H1 (cell line): ENCODE measurements at regions of chr1 and their contacts with region 1.

Region 1: GRCh38 chr1:31663622-31664452 is 19.2 kb upstream of the PEF1 start:
- DNase-seq: peak; percentile 25 to 98
- H3K4me3 ChIP-seq: no peak overlapping the region
- H3K27ac ChIP-seq: no peak overlapping the region
- H3K4me1 ChIP-seq: peaks cover 0 to 3% (median 0%) of the 10 kb centered on the region in 4 experiments; a peak in 3 of 7 replicates
- H3K27me3 ChIP-seq: no peaks in the 10 kb centered on the region
- CTCF ChIP-seq: peak in 2 of 3 experiments; percentile 93 to 96; a peak in 3 of 4 replicates
- EP300 ChIP-seq: no peak
- POLR2A ChIP-seq: no peak
- RAD21 ChIP-seq: peak; percentile 96 to 98

Region 2: GRCh38 chr1:31368611-31369107 is 295.2 kb before region 1 on chr1:
- CTCF ChIA-PET with region 1: no interaction called
- POLR2A ChIA-PET with region 1: no interaction called
- DNase-seq: no peak
- H3K4me3 ChIP-seq: no peak overlapping the region
- H3K27ac ChIP-seq: no peak overlapping the region
- H3K4me1 ChIP-seq: peaks cover 5 to 27% (median 17%) of the 10 kb centered on the region in 4 experiments
- H3K27me3 ChIP-seq: 0 out of 7 replicates have a peak, but pooled peaks cover 0 to 2% (median 0%) of the 10 kb centered on the region in 4 experiments
- CTCF ChIP-seq: no peak
- EP300 ChIP-seq: no peak
- POLR2A ChIP-seq: peak in 1 of 2 experiments; percentile 13; a peak in 1 of 3 replicates
- RAD21 ChIP-seq: no peak

Region 3: DNA sequence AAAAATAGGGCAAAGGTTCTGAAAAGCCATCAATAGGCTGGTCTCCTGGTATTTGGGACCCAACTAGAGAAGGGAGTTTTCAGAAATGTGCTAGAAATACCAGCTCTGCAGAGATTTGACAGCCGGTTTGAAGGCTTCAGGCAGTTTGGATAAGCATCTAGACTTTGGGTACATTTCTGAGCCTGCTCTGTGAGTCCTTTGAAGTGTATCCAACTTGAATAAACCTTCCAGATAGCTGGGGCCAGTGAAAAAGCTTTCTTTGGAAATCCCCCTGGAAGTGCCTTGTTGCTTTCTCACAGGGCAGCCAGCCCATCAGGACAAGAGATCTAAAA is 12.8 kb before region 1 on chr1:
- CTCF ChIA-PET with region 1: interaction called, 52 read pairs
- POLR2A ChIA-PET with region 1: interaction called, 4 read pairs
- DNase-seq: no peak
- H3K4me3 ChIP-seq: no peak overlapping the region
- H3K27ac ChIP-seq: no peak overlapping the region
- H3K4me1 ChIP-seq: no peaks in the 10 kb centered on the region
- H3K27me3 ChIP-seq: no peaks in the 10 kb centered on the region
- CTCF ChIP-seq: no peak
- EP300 ChIP-seq: no peak
- POLR2A ChIP-seq: no peak
- RAD21 ChIP-seq: no peak

Region 4: DNA sequence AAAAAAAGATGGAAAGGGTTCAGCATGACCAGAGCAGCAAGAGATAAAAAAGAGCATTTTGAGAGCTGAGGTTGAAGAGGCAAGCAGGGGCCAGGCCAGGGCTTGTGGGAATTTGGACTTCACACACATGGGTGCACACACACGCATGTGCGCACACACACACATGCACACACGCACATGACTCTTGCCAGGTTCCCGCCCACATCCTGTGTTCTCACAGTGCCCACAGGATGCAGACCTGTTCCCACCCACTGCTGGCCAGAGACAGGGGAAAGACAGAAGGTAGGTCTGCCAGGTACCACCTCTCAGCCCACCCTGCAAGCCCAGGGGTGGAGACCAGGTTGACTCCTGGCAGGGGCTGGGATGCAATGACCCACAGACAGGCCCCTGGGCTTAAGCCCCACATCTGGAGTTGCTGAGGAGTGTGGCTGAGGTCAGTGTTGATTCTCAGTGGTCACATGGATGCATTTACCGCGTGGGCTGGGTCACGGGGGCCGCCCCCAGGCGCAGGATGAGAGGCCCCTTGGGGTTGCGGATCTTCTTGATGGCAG is 35.6 kb after region 1 on chr1:
- CTCF ChIA-PET with region 1: interaction called, 100 read pairs
- POLR2A ChIA-PET with region 1: interaction called, 8 read pairs
- DNase-seq: no peak
- H3K4me3 ChIP-seq: no peak overlapping the region
- H3K27ac ChIP-seq: no peak overlapping the region
- H3K4me1 ChIP-seq: peaks cover 4 to 13% (median 5%) of the 10 kb centered on the region in 4 experiments
- H3K27me3 ChIP-seq: no peaks in the 10 kb centered on the region
- CTCF ChIP-seq: no peak
- EP300 ChIP-seq: no peak
- POLR2A ChIP-seq: no peak
- RAD21 ChIP-seq: no peak

Region 5: DNA sequence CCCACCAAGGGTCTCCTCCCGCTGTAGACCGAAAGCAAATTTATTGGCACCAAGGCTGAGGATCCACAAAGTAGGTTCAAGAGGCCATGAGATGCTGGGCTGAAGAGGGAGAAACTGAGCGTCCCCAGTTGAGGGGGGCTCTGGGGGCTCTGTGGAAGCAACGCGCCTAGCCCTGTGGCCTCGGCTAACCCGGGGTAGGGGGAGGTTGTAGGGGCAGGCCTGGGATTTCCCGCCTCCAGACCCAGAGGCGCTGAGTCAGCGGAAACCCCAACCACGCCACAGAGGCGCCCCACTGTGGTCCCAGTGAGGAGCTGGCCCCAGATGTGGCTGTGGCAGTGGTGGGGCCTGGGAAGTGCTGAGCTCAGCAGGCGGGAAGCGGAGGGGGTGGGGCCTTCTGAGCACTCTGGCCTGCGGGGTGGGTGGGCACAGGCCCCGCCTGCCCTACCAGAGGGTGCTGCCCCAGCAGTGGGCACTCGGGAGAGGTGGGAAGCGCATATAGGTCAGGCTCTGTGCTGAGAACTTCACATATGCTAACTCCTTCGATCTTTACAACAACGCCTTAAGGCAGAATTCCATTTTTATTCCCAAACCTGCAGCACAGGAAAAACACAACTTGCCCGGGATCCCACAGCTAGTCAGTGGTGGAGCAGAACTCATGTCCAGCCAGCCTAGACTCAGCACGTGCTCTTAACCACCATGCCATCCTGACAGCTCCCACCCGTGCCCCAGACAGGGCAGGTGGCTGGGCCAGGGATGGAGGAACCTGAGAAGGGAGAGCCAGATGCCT is 41.4 kb after region 1 on chr1:
- CTCF ChIA-PET with region 1: interaction called, 181 read pairs
- POLR2A ChIA-PET with region 1: interaction called, 8 read pairs
- DNase-seq: peak in 1 of 2 experiments; percentile 80
- H3K4me3 ChIP-seq: peak overlapping the region in 3 of 4 experiments; percentile 15 to 69 (median 17); a peak in 5 of 8 replicates
- H3K27ac ChIP-seq: no peak overlapping the region; the same call in 1 of the 2 replicates
- H3K4me1 ChIP-seq: peaks cover 15 to 35% (median 16%) of the 10 kb centered on the region in 4 experiments
- H3K27me3 ChIP-seq: no peaks in the 10 kb centered on the region; a peak in 1 of 7 replicates
- CTCF ChIP-seq: peak in 2 of 3 experiments; percentile 6 to 24; a peak in 2 of 4 replicates
- EP300 ChIP-seq: no peak
- POLR2A ChIP-seq: no peak
- RAD21 ChIP-seq: peak; percentile 32 to 47; a peak in 3 of 4 replicates

Region 6: DNA sequence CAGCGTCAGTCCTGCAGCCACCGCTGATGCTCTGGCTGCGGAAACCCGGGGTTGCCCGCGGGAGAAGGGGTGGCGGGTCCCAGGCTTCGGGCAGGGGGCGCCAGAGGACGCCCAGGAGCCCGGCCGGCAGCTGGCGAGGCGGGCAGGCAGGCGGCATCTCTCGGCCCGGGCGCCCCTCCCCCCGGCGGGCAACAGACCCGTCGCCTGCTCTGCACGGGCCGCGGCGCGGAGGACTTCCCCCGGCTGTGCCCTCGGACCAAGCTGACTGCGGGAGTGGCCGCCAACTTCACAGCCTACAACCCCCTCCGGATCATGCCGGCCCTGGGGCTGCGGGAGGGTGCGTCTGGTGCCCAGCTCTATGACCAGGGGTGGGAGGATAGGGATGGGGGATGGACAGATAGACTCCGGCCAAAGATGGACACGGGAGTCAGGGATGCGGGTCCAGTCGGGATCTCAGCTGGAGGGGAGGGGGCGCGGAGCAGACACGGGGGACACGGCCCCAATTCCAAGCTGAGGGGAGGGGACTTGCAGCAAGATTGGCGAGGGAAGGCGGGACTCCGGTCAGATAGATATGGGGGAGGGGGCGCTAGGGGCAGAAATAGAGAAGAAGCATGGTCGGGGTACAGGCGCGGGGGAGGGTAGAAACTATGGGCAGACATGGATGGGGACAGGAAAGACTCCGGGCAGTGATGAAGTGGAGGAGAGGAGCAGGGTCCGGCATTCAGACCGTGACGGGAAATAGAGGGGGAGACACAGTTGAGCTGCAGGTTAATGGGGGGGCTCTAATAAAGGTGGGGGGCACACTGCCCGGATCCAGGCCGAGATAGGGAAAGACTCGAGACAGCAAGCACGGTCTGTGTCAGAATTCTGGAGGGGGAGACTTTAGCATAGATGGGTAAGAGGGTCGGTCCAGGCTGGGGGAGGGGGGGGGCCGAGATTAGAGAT is 99.2 kb after region 1 on chr1:
- CTCF ChIA-PET with region 1: interaction called, 48 read pairs
- POLR2A ChIA-PET with region 1: interaction called, 3 read pairs
- DNase-seq: peak in 1 of 2 experiments; percentile 94
- H3K4me3 ChIP-seq: peak overlapping the region; percentile 48 to 75 (median 62)
- H3K27ac ChIP-seq: no peak overlapping the region
- H3K4me1 ChIP-seq: peaks cover 24 to 55% (median 34%) of the 10 kb centered on the region in 4 experiments
- H3K27me3 ChIP-seq: peaks cover 3 to 16% (median 7%) of the 10 kb centered on the region in 4 experiments; a peak in 5 of 7 replicates
- CTCF ChIP-seq: peak in 2 of 3 experiments; percentile 72 to 90; a peak in 3 of 4 replicates
- EP300 ChIP-seq: peak in 1 of 2 experiments; percentile 77; a peak in 1 of 3 replicates
- POLR2A ChIP-seq: no peak
- RAD21 ChIP-seq: peak; percentile 55 to 81

Region 7: DNA sequence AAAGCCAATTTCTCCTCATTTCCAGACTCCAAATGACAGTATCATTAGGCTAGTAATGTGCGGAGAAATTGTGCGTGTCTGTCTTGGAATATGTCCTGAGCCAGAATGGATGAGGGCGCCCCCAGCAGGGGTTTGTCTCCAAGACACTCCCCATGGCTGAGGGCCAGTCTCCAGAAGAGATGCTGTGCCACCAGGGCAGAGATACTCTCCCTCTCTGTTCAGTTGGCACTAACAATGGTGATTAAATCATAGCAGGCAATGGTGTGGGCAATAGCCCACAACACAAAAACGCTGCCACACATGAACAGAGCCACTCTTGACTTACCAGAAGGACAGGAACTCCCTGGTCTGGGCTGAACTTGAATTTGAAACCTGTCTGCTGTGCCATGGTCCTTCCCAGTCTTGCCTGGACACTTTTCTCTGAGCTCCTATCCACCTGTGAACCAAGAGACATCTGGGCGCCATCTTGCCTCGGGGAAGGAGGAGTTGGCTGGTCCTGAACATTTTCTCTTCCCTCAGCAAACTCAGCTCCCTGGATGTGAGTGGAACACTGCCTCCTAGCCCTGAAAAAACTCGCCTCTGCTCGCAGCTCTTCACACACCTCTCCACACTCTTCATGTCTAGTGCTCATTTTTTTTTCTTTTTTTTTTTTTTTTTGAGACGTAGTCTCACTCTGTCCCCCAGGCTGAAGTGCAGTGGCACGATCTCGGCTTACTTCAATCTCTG is 115.1 kb after region 1 on chr1:
- CTCF ChIA-PET with region 1: interaction called, 18 read pairs
- POLR2A ChIA-PET with region 1: no interaction called
- DNase-seq: no peak
- H3K4me3 ChIP-seq: no peak overlapping the region
- H3K27ac ChIP-seq: no peak overlapping the region
- H3K4me1 ChIP-seq: peaks cover 0 to 21% (median 18%) of the 10 kb centered on the region in 4 experiments; a peak in 6 of 7 replicates
- H3K27me3 ChIP-seq: peaks cover 1 to 14% (median 9%) of the 10 kb centered on the region in 4 experiments
- CTCF ChIP-seq: no peak
- EP300 ChIP-seq: no peak
- POLR2A ChIP-seq: no peak
- RAD21 ChIP-seq: no peak

Region 8: DNA sequence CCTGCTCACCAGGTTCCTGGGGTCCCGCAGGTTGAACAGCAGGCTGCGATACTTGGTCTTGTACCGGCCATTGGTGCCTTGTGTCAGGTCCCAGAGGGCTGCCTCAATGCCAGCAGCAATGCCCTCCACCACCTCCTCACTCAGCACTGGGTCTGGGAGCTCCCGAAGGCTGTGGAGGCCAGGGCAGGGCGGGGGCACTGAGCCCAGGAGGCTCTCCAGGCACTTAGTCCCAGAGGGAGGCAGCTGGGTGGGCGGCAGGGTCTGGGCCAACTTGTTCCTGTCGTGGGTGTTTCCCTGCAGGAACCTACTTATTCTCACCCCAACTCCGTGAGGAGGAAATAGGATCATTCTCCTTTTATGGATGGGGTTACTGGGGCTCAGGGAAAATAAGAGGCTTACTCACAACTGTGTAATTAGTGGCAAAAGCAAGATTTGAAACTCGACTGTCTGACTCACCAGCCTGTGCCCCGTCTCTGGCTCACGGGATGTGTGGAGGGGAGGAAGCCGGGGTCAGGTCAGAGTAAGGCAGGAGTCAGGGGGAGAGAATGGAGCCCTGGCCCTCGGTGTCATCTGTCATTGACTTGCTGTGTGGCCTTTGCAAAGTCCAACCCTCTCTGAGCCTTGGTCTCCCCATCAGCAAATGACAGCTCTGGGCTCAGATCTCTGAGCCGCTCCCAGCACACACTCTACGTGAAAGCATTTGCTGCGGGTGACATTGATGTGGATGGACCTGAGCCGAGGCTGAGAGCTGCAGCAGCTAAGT is 134.8 kb after region 1 on chr1:
- CTCF ChIA-PET with region 1: interaction called, 80 read pairs
- POLR2A ChIA-PET with region 1: no interaction called
- DNase-seq: no peak
- H3K4me3 ChIP-seq: no peak overlapping the region
- H3K27ac ChIP-seq: no peak overlapping the region
- H3K4me1 ChIP-seq: peaks cover 0 to 16% (median 8%) of the 10 kb centered on the region in 4 experiments; a peak in 5 of 7 replicates
- H3K27me3 ChIP-seq: peaks cover 0 to 3% (median 0%) of the 10 kb centered on the region in 4 experiments; a peak in 2 of 7 replicates
- CTCF ChIP-seq: no peak
- EP300 ChIP-seq: no peak
- POLR2A ChIP-seq: no peak
- RAD21 ChIP-seq: no peak